Activated CD4-positive, alpha-beta T cell treated with anti-CD3 and anti-CD28 coated beads, Interleukin-2, amount 10 ng/mL, durations not matched to agents 24 days and 14 days (primary cell): ENCODE measurements at regions of chr2 and their contacts with region 1.

Region 1: DNA sequence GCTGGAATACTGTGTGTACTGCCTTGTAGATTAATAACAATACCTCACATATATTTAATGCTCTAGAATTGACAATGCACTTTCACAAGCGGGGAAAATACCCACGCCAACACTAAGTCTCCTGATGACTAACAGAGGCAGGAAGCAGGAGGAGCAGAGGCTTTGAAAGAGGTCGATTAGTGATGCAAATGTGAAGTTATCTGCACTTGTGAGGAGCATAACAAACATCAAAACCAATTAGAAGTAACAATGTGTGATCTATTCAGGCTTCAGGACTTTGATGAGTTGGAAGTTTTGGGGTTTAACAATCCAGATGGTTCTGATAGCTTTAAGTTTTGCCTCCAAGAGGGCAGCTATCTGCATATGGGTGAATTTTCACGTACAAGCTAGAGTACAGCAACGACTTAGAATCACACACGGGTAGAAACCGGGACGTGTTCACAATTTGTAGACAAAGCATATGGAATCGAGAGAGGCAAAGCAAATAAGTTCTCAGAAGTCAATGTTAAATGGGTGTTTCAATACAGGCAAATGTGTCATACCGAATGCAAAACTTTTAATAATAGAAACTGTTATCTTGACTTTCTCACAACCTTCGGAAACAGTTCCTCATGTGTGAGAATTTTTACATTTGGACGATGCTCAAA is 114.5 kb downstream of the METTL8 start:
- DNase-seq: peak; percentile 85
- H3K4me3 Mint-ChIP-seq: peak overlapping the region; percentile 76
- H3K27ac Mint-ChIP-seq: peak overlapping the region; percentile 100
- H3K4me1 Mint-ChIP-seq: peaks cover 50% of the 10 kb centered on the region
- H3K27me3 Mint-ChIP-seq: no peaks in the 10 kb centered on the region

Region 2: GRCh38 chr2:171018522-171018921 is 300.8 kb before region 1 on chr2:
- intact Hi-C with region 1: loop called (anchors 5 kb)
- DNase-seq: no peak
- H3K4me3 Mint-ChIP-seq: no peak overlapping the region
- H3K27ac Mint-ChIP-seq: peak overlapping the region; percentile 46
- H3K4me1 Mint-ChIP-seq: peaks cover 11% of the 10 kb centered on the region
- H3K27me3 Mint-ChIP-seq: no peaks in the 10 kb centered on the region

Region 3: DNA sequence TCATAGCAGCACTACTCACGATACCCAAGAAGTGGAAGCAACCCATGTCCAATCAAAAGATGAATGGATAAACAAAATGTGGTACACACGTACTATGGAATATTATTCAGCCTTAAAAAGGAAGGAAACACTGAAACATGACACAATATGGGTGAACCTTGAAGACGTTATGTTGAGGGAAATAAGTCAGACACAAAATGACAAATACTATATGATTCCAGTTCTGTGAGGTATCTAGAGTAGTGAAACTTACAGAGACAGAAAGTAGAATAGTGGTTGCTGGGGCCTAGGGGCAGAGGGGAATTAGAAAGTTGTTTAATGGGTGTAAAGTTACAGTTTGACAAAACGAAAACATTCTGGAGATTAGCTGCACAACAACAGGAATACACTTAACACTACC is 183.3 kb before region 1 on chr2:
- intact Hi-C with region 1: loop called (anchors 1 kb)
- DNase-seq: no peak
- H3K4me3 Mint-ChIP-seq: no peak overlapping the region
- H3K27ac Mint-ChIP-seq: peak overlapping the region; percentile 90
- H3K4me1 Mint-ChIP-seq: peaks cover 19% of the 10 kb centered on the region
- H3K27me3 Mint-ChIP-seq: no peaks in the 10 kb centered on the region

Region 4: GRCh38 chr2:171244970-171245782 is 74.1 kb before region 1 on chr2:
- intact Hi-C with region 1: loop called (anchors 1 kb)
- DNase-seq: no peak
- H3K4me3 Mint-ChIP-seq: no peak overlapping the region
- H3K27ac Mint-ChIP-seq: no peak overlapping the region
- H3K4me1 Mint-ChIP-seq: peaks cover 43% of the 10 kb centered on the region
- H3K27me3 Mint-ChIP-seq: no peaks in the 10 kb centered on the region

Region 5: GRCh38 chr2:171307560-171307959 is 11.7 kb before region 1 on chr2:
- intact Hi-C with region 1: no loop called
- DNase-seq: no peak
- H3K4me3 Mint-ChIP-seq: no peak overlapping the region
- H3K27ac Mint-ChIP-seq: no peak overlapping the region
- H3K4me1 Mint-ChIP-seq: peaks cover 5% of the 10 kb centered on the region
- H3K27me3 Mint-ChIP-seq: no peaks in the 10 kb centered on the region

Region 6: GRCh38 chr2:171416009-171416926 is 97.0 kb after region 1 on chr2:
- intact Hi-C with region 1: loop called (anchors 1 kb)
- DNase-seq: peak; percentile 93
- H3K4me3 Mint-ChIP-seq: no peak overlapping the region
- H3K27ac Mint-ChIP-seq: peak overlapping the region; percentile 80
- H3K4me1 Mint-ChIP-seq: peaks cover 23% of the 10 kb centered on the region
- H3K27me3 Mint-ChIP-seq: no peaks in the 10 kb centered on the region

Region 7: GRCh38 chr2:171469176-171469575 is 149.9 kb after region 1 on chr2:
- intact Hi-C with region 1: no loop called
- DNase-seq: no peak
- H3K4me3 Mint-ChIP-seq: no peak overlapping the region
- H3K27ac Mint-ChIP-seq: no peak overlapping the region
- H3K4me1 Mint-ChIP-seq: no peaks in the 10 kb centered on the region
- H3K27me3 Mint-ChIP-seq: no peaks in the 10 kb centered on the region